Motor neuron (in vitro differentiated cells): ENCODE measurements at regions of chr15 and their contacts with region 1.

Region 1: DNA sequence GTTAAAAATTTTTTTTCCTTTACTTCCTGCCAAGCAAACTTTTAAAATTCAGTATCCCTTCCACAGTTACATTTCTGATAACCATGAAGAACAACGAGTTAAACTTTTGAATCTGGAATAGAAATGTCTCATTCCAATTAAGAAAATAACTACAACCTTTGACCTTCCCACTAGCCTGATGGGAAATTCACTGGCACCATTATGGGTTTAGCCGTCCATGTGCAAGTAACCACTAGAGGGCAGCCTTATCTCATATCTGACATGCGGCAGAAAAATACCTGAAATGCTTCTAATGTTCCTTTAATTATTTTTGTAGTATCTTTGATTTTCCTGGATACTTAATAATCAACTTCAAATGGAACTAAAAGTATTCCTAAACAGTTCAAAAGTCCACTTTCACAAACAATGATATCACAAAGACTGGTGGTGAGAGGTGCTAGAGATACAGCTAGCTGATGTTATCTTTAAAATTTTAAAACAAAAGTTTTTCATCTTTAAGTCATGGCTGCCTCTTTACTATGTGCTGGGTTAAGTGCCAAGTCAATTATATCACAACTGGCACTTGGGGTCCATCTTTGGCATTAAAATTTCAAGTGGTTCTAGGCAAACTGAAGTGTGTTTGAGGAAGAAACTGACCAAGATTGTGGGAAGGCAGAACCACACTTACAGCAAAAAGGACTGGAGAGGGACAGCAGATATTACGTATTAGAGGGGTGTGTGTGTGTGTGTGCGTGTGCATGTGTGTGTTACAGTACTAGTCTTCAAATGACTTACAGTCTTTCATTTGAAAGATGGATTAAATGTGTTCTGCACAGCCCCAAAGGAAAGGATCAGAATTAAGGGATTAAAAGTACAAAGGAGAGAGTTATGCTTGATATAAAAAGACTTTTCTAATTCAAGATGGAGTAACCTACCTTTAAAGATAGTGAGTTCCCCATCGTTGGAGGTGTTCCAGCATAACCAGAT is 107.1 kb upstream of the ICE2 start:
- ATAC-seq: peak in 5 of 8 experiments; percentile 36 to 63 (median 45)
- H3K4me3 ChIP-seq: no peak overlapping the region
- H3K27ac ChIP-seq: no peak overlapping the region
- H3K4me1 ChIP-seq: peaks cover 5 to 7% of the 10 kb centered on the region in 2 donors

Region 2: DNA sequence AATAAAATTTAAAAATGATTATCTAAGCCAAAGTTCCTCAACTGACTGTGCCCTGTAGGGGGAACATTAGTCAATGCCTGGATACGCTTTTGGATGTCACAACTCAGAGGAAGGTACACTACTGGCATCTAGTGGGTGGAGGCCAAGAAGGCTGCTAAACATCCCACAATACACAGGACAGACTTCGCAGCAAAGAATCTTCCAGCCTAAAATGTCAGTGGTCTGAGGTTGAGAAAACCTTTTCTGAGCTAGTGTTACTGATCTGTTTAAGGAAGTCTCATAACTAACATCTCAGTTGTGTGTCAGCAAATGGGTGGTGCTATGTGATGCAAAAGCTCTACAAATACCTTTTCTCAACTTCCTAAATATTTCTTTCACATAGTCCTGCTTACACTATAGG is 1400.3 kb before region 1 on chr15:
- in situ Hi-C with region 1: no loop called
- ATAC-seq: peak in 1 of 8 experiments; percentile 32
- H3K4me3 ChIP-seq: no peak overlapping the region
- H3K27ac ChIP-seq: no peak overlapping the region
- H3K4me1 ChIP-seq: no peaks in the 10 kb centered on the region

Region 3: DNA sequence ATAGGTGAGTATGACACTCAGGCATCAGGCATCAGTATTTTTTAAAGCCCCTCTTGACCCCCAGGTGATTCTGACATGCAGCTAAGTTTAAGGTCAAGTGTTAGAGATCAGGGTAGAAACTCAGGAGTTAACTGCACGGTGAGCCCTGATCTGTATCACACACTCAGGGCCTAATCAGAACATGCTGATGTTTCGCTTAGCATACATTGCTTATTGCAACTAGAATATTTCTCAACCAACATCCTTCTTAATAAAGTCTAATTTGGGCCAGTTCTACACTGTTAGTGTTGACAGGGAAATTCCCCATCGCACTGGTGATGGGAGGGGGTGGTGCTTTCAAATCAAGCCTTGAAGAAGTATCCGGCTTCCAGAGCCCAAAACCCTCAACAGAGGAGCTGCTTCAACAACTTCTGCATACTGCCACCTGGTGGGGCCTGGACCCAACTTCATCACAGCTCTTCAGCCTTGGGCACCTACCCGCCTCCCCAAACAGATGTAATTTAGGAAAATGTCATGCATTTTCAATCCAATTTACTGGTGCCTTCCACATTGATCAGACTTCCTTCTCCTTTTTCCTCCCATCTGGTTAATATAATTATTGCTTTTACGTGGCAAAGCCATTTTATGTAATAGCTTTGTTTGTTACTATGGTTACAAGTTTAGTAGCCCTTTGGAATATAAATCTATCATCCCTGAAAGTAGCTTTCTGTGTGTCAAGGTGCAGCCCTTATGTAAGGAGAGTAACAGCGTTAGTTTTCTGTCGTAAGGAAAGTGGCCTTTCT is 330.8 kb after region 1 on chr15:
- in situ Hi-C with region 1: loop called in 8 of 9 experiments (anchors 10 to 25 kb)
- ATAC-seq: peak; percentile 78 to 97 (median 88)
- H3K4me3 ChIP-seq: no peak overlapping the region
- H3K27ac ChIP-seq: no peak overlapping the region
- H3K4me1 ChIP-seq: peaks cover 18 to 19% of the 10 kb centered on the region in 2 donors

Region 4: DNA sequence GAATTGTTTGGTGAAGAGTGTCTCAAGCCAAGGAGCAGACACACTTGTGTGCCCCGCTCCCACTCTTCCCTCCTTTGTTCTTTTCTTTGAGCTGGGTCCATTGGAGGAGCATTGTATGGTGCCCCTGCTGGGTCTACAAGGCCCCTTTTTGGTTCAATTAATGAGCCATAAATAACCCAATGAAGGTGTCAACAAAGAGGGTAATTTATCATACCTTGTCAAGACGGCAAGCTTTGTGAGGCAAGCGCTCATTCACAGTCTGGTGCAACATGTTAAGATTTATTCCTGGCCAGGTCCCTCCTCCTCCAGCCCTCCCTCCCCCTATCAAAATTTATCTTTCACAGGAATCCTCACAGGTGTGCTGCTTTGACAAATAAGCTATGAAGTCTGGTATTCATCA is 342.9 kb after region 1 on chr15:
- in situ Hi-C with region 1: loop called in 7 of 9 experiments (anchors 10 to 25 kb)
- ATAC-seq: peak in 5 of 8 experiments; percentile 52 to 67 (median 65)
- H3K4me3 ChIP-seq: no peak overlapping the region
- H3K27ac ChIP-seq: no peak overlapping the region
- H3K4me1 ChIP-seq: peaks cover 13% of the 10 kb centered on the region in 2 donors